Sciatic nerve (tissue), 2 donors: ENCODE measurements at regions of chr15 and their contacts with region 1.

Region 1: DNA sequence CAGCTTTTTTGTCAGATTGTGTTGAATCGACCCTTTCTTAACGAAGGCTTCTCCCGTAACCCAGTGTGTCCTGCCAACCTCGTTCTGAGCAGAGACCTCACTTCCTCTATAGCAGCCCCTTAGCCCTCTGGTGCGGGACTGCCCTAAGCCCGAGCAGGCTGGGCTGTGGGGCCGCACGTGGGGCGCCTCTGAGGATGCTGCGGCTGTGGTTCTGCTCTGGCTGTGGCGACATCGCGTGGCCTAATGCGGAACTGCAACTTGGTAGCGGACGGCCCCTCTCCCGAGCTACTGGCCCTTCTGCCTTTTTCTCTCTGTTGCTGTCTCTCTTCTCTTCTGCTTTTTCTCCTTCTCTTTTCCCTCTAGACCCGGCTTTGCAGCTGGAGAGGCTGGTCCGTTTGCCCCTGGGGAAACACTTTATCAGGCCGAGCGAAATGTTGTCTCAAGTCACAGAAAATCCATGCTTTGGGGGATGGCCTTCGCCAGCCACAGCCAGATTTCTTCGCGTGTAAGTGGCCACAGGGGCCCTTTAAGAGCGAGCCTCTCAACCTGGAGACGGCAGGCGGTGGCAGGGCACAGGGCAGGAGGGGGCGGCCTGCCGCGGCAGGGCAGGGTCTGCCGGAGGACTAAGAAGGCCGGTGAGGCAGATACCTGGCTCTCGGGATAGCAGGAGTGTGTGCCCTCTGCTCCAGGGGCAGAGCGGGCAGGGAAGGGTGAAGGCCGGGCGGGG is 19.4 kb upstream of the KIF23 start:
- DNase-seq: peak; percentile 94
- ATAC-seq: peak; percentile 95

Region 2: GRCh38 chr15:69058830-69059556 is 335.7 kb before region 1 on chr15:
- intact Hi-C with region 1: loop called (anchors 5 kb)
- DNase-seq: peak; percentile 95
- ATAC-seq: peak; percentile 93

Region 3: GRCh38 chr15:70936326-70936725 is 1541.6 kb after region 1 on chr15:
- intact Hi-C with region 1: no loop called
- DNase-seq: no peak
- ATAC-seq: no peak